ENCODE measurements at regions of chr1 and their contacts with region 1.

Region 1: GRCh38 chr1:111507411-111508201 is 4.2 kb upstream of the ADORA3 start:
- DNase-seq: peak in 13 of 14 experiments; percentile 43 to 83 (median 54)
- ATAC-seq: peak; percentile 49
- H3K4me3 ChIP-seq: peak overlapping the region; percentile 46
- H3K4me3 Mint-ChIP-seq: peak overlapping the region; percentile 84
- H3K27ac ChIP-seq: peak overlapping the region; percentile 83 to 90
- H3K27ac Mint-ChIP-seq: no peak overlapping the region
- H3K4me1 ChIP-seq: peaks cover 97% of the 10 kb centered on the region
- H3K4me1 Mint-ChIP-seq: peaks cover 55% of the 10 kb centered on the region
- H3K27me3 ChIP-seq: no peaks in the 10 kb centered on the region
- H3K27me3 Mint-ChIP-seq: no peaks in the 10 kb centered on the region
- CTCF ChIP-seq: no peak

Region 2: DNA sequence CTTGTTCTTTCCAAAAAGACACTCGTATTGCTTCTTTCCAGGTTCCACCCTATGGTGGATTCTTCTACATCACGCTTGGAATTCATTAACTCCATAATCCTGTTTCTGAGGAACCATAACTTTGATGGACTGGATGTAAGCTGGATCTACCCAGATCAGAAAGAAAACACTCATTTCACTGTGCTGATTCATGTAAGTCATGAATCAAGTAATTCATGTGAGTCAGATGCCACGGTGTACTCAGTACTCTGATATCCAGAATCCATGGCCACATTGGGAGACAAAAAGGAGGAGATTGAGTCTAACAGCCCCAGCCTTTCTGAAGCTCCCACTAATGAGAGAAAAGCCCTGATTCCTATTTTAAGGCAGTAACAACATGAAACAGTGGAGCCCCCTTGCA is 272.7 kb before region 1 on chr1:
- CTCF ChIA-PET with region 1: no interaction called
- POLR2A ChIA-PET with region 1: no interaction called
- intact Hi-C with region 1: no loop called
- DNase-seq: no peak
- ATAC-seq: no peak
- H3K4me3 ChIP-seq: no peak overlapping the region
- H3K4me3 Mint-ChIP-seq: no peak overlapping the region
- H3K27ac ChIP-seq: no peak overlapping the region
- H3K27ac Mint-ChIP-seq: no peak overlapping the region
- H3K4me1 ChIP-seq: peaks cover 13% of the 10 kb centered on the region
- H3K4me1 Mint-ChIP-seq: peaks cover 70% of the 10 kb centered on the region
- H3K27me3 ChIP-seq: no peaks in the 10 kb centered on the region
- H3K27me3 Mint-ChIP-seq: no peaks in the 10 kb centered on the region
- CTCF ChIP-seq: no peak

Region 3: GRCh38 chr1:111481387-111482221 is 26.0 kb before region 1 on chr1:
- CTCF ChIA-PET with region 1: interaction called, 7 read pairs
- POLR2A ChIA-PET with region 1: interaction called, 81 read pairs
- intact Hi-C with region 1: loop called in 1 of 2 experiments (anchors 2 kb)
- DNase-seq: peak; percentile 17 to 79 (median 56)
- ATAC-seq: peak; percentile 40
- H3K4me3 ChIP-seq: no peak overlapping the region
- H3K4me3 Mint-ChIP-seq: peak overlapping the region; percentile 55
- H3K27ac ChIP-seq: no peak overlapping the region
- H3K27ac Mint-ChIP-seq: no peak overlapping the region
- H3K4me1 ChIP-seq: peaks cover 30% of the 10 kb centered on the region
- H3K4me1 Mint-ChIP-seq: peaks cover 62% of the 10 kb centered on the region
- H3K27me3 ChIP-seq: no peaks in the 10 kb centered on the region
- H3K27me3 Mint-ChIP-seq: no peaks in the 10 kb centered on the region
- CTCF ChIP-seq: peak; percentile 51

Region 4: DNA sequence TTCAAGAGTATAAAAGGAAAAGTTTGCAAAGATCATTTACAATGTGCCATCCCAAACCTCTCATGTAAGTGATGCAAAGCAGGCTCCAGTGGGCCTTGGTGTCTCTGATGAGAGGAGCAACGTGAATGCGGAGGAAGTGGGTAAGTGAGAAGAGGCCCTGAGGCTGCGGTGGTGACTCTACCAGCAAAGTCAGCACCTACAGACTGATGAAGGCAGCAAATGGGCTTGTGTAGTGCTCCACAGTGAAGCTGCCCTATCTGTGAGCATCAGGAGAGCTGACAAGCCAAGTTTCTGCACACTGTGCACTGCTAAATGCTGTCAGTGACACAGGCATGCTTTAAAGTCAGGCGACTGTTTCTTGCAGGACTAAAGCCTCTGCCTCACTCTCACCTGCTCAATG is 96.4 kb after region 1 on chr1:
- CTCF ChIA-PET with region 1: interaction called, 15 read pairs
- POLR2A ChIA-PET with region 1: interaction called, 10 read pairs
- intact Hi-C with region 1: loop called in 1 of 2 experiments (anchors 5 kb)
- DNase-seq: peak; percentile 63 to 91 (median 76)
- ATAC-seq: peak; percentile 98
- H3K4me3 ChIP-seq: no peak overlapping the region
- H3K4me3 Mint-ChIP-seq: peak overlapping the region; percentile 37
- H3K27ac ChIP-seq: peak overlapping the region; percentile 30 to 63
- H3K27ac Mint-ChIP-seq: peak overlapping the region; percentile 84
- H3K4me1 ChIP-seq: peaks cover 74% of the 10 kb centered on the region
- H3K4me1 Mint-ChIP-seq: peaks cover 76% of the 10 kb centered on the region
- H3K27me3 ChIP-seq: no peaks in the 10 kb centered on the region
- H3K27me3 Mint-ChIP-seq: no peaks in the 10 kb centered on the region
- CTCF ChIP-seq: no peak

Region 5: GRCh38 chr1:111664652-111665051 is 157.0 kb after region 1 on chr1:
- CTCF ChIA-PET with region 1: interaction called, 12 read pairs
- POLR2A ChIA-PET with region 1: interaction called, 6 read pairs
- intact Hi-C with region 1: no loop called
- DNase-seq: no peak
- ATAC-seq: peak; percentile 44
- H3K4me3 ChIP-seq: no peak overlapping the region
- H3K4me3 Mint-ChIP-seq: peak overlapping the region; percentile 57
- H3K27ac ChIP-seq: no peak overlapping the region
- H3K27ac Mint-ChIP-seq: peak overlapping the region; percentile 60
- H3K4me1 ChIP-seq: peaks cover 20% of the 10 kb centered on the region
- H3K4me1 Mint-ChIP-seq: peaks cover 66% of the 10 kb centered on the region
- H3K27me3 ChIP-seq: no peaks in the 10 kb centered on the region
- H3K27me3 Mint-ChIP-seq: no peaks in the 10 kb centered on the region
- CTCF ChIP-seq: no peak

Region 6: DNA sequence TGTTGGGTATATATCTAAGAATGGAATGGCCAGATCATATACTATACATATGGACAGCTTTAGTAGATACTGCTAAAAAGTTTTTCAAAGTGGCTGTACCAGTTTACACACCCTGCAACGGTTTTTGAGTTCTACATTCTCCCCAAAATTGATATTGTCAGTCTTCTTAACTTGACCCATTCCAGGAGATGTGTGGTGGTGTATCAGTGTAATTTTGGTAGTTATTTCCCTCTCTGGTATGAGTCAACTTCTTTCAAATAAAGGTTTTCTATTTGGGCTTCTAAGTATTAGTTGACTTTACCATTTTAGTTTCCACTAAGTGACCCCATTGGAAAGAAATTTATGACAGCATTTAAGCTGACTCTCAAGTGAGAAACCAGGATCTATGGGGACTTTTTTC is 202.4 kb after region 1 on chr1:
- CTCF ChIA-PET with region 1: interaction called, 27 read pairs
- POLR2A ChIA-PET with region 1: interaction called, 10 read pairs
- intact Hi-C with region 1: loop called (anchors 2 to 5 kb)
- DNase-seq: no peak
- ATAC-seq: no peak
- H3K4me3 ChIP-seq: no peak overlapping the region
- H3K4me3 Mint-ChIP-seq: no peak overlapping the region
- H3K27ac ChIP-seq: no peak overlapping the region
- H3K27ac Mint-ChIP-seq: peak overlapping the region; percentile 2
- H3K4me1 ChIP-seq: no peaks in the 10 kb centered on the region
- H3K4me1 Mint-ChIP-seq: peaks cover 9% of the 10 kb centered on the region
- H3K27me3 ChIP-seq: no peaks in the 10 kb centered on the region
- H3K27me3 Mint-ChIP-seq: no peaks in the 10 kb centered on the region
- CTCF ChIP-seq: no peak

Region 7: GRCh38 chr1:111755331-111756123 is 247.9 kb after region 1 on chr1 and contains the start of gene DDX20:
- CTCF ChIA-PET with region 1: interaction called, 8 read pairs
- POLR2A ChIA-PET with region 1: interaction called, 10 read pairs
- intact Hi-C with region 1: no loop called
- DNase-seq: peak; percentile 87 to 97 (median 92)
- ATAC-seq: peak; percentile 85
- H3K4me3 ChIP-seq: peak within 1 kb of the TSS; percentile 89
- H3K4me3 Mint-ChIP-seq: peak within 1 kb of the TSS; percentile 89
- H3K27ac ChIP-seq: peak within 1 kb of the TSS; percentile 89 to 95
- H3K27ac Mint-ChIP-seq: peak within 1 kb of the TSS; percentile 96
- H3K4me1 ChIP-seq: peaks cover 24% of the 10 kb centered on the region
- H3K4me1 Mint-ChIP-seq: peaks cover 45% of the 10 kb centered on the region
- H3K27me3 ChIP-seq: no peaks in the 10 kb centered on the region
- H3K27me3 Mint-ChIP-seq: no peaks in the 10 kb centered on the region
- CTCF ChIP-seq: peak; percentile 89
- total RNA-seq, gene DDX20: 27.2 to 27.4 TPM

Region 8: DNA sequence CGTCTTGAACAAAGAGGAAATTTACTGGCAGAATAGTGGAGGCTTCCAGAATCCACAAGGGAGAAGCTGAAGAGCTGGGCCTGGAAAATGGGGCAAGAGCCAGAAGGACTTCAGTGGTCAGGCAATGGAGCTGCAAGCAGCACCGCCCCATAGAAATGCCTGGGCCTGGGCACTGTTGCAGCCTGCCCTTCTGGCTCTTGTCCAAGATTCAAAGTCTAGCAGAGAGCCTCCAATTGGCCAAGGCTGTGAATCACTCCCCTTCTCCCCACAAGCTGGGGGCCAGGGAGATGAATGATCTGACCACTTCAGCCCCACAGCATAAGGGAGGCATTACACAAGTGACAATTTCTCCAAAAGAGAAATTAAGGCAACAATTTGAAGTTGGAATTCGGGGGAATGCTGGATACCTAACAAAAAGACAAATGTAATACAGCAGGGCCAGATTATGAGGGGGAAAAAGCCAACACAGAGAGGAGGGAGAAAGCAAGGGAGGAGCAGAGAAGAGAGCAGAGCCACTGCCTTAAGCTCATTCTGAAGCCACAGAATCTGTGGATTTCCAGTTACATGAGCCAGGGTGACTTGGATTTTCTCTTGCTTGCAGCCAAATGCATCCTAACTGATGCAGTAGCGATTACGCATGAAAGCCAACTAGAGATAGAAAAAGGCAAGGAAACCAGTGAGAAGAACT is 1645.7 kb after region 1 on chr1:
- CTCF ChIA-PET with region 1: no interaction called
- POLR2A ChIA-PET with region 1: no interaction called
- intact Hi-C with region 1: no loop called
- DNase-seq: no peak
- ATAC-seq: no peak
- H3K4me3 ChIP-seq: no peak overlapping the region
- H3K4me3 Mint-ChIP-seq: no peak overlapping the region
- H3K27ac ChIP-seq: no peak overlapping the region
- H3K27ac Mint-ChIP-seq: no peak overlapping the region
- H3K4me1 ChIP-seq: no peaks in the 10 kb centered on the region
- H3K4me1 Mint-ChIP-seq: peaks cover under 1% of the 10 kb centered on the region
- H3K27me3 ChIP-seq: no peaks in the 10 kb centered on the region
- H3K27me3 Mint-ChIP-seq: no peaks in the 10 kb centered on the region
- CTCF ChIP-seq: no peak